ENCODE measurements at regions of chr12 and their contacts with region 1.

Region 1: DNA sequence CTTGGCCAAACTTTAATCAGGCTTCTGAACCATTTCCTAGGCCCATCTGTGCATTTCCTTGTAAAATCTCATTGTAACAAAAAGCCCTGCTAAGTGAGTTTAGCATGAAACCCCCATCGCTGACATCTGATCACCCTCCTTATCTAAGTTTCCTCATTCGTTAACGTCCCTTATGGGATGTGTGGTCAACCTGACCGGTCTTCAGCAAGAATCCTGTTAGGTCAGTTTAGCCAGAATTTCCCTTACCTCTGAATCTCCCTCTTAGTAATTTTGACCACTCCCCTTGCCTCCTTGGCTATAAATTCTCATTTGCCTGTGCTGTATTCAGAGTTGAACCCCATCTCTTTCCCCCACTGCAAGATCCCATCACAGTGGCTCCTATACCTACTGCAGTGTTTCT is 239.3 kb downstream of the RMST start:
- DNase-seq: peak; percentile 69
- H3K4me3 Mint-ChIP-seq: peak overlapping the region; percentile 10
- H3K27ac Mint-ChIP-seq: peak overlapping the region; percentile 48
- H3K4me1 Mint-ChIP-seq: peaks cover 29% of the 10 kb centered on the region
- H3K27me3 Mint-ChIP-seq: no peaks in the 10 kb centered on the region
- CTCF ChIP-seq: no peak

Region 2: DNA sequence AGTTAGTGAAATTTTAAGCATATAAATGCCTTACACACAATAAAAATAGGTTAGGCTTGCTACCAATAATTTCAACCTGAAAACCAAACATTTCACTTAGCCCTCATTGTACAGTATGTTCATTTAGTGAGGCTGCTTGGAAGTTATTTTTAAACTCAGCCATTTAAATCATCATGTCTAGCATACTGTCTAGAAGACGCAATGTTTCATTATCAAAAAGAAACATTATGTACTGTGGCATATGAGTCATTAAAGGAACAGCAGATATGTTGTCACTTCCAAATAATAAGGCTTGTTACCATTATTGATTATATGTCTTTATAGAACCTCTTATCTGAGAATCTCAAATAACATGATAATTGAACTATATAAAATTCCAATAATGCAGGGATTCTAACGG is 65.4 kb after region 1 on chr12:
- CTCF ChIA-PET with region 1: no interaction called
- intact Hi-C with region 1: loop called (anchors 5 kb)
- DNase-seq: no peak
- H3K4me3 Mint-ChIP-seq: no peak overlapping the region
- H3K27ac Mint-ChIP-seq: no peak overlapping the region
- H3K4me1 Mint-ChIP-seq: peaks cover 22% of the 10 kb centered on the region
- H3K27me3 Mint-ChIP-seq: no peaks in the 10 kb centered on the region
- CTCF ChIP-seq: no peak

Region 3: DNA sequence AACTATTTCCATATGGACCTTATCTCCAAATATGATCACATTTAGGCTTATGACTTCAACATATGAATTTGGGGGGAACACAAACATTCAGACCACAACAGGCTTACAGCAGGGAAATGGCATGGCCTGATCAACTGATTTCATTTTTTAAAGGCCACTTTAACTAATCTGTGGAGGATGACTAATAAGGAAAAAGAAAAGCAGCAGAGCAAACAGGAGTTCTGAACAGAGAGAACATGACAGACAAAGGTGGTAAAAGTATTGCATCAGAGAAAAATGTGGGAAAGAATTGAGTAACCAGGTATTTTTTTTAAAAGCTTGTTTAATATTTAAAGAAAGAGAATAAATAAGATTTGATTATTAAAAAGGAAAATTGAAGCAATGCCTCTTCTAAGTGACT is 447.4 kb after region 1 on chr12:
- CTCF ChIA-PET with region 1: no interaction called
- intact Hi-C with region 1: loop called (anchors 5 kb)
- DNase-seq: no peak
- H3K4me3 Mint-ChIP-seq: no peak overlapping the region
- H3K27ac Mint-ChIP-seq: peak overlapping the region; percentile 84
- H3K4me1 Mint-ChIP-seq: peaks cover 23% of the 10 kb centered on the region
- H3K27me3 Mint-ChIP-seq: no peaks in the 10 kb centered on the region
- CTCF ChIP-seq: no peak